Dorsolateral prefrontal cortex (tissue), 120 donors: ENCODE measurements at regions of chr17 and their contacts with region 1.

Region 1: GRCh38 chr17:4858882-4859260 is 25.7 kb downstream of the MINK1 start:
- DNase-seq: peak in 7 of 10 donors; percentile 45 to 80 (median 54)
- H3K4me3 ChIP-seq: peak overlapping the region in 41 of 59 donors; percentile 1 to 53 (median 28)
- H3K27ac ChIP-seq: peak overlapping the region; percentile 80 to 99 (median 95)
- H3K27me3 ChIP-seq: no peaks in the 10 kb centered on the region
- CTCF ChIP-seq: no peak

Region 2: DNA sequence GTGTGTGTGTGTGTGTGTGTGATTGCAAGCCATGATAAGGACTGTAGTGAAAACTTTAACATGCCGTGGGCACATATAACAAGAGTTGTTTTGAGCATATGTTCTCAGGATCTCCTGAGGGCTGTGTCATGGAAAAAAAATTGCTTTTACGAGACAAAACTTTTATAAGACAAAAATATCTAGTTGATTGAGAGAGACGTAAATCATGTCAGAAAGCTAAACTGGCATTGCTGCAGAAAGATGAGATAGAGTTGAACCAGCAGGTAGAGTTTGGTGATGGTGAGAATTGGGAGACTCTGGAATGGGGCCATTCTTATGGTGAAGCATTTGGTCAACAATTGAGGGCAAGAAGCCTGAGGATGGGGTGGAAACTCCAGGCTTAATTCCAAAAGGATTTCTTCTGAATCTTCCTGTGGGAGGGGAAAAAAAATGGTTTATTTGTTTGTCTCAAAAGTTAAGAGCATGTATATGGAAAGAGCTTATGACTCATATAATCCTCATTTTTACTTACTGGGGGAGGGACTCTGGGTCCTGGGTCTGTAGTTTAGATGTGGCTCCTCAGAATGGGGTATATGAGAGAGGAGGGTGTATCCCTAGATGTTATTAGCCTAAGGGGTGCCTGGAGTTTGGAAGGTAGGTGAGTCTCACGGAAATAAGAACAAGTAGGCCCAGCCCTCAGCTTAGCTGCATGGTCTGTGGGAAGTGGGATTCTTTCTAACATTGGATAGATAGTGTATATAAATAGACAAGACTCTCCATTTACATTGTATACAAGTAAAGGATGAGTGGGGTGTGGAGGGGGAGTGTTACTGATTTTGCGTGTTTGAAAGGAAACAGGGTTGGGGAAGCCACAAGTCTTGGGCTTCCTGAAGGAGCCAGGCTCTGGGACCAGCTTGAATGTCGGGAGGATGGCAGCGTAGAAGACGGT is 18.6 kb before region 1 on chr17:
- intact Hi-C with region 1: loop called (anchors 2 kb)
- DNase-seq: no peak
- H3K4me3 ChIP-seq: no peak overlapping the region
- H3K27ac ChIP-seq: peak overlapping the region in 35 of 59 donors; percentile 6 to 99 (median 41)
- H3K27me3 ChIP-seq: no peaks in the 10 kb centered on the region
- CTCF ChIP-seq: no peak

Region 3: GRCh38 chr17:4881761-4882555 is 23.1 kb after region 1 on chr17:
- intact Hi-C with region 1: loop called (anchors 2 kb)
- DNase-seq: peak; percentile 60 to 76 (median 69)
- H3K4me3 ChIP-seq: peak overlapping the region in 12 of 59 donors; percentile 4 to 33 (median 15)
- H3K27ac ChIP-seq: peak overlapping the region in 58 of 59 donors; percentile 18 to 99 (median 86)
- H3K27me3 ChIP-seq: no peaks in the 10 kb centered on the region
- CTCF ChIP-seq: peak; percentile 68 to 96 (median 86)